ENCODE measurements at regions of chr21 and their contacts with region 1.

Region 1: GRCh38 chr21:37563641-37564340 is 197.2 kb downstream of the DYRK1A start:
- DNase-seq: peak; percentile 98 to 99 (median 98)
- ATAC-seq: peak; percentile 93
- H3K4me3 ChIP-seq: peak overlapping the region; percentile 61
- H3K27ac ChIP-seq: peak overlapping the region; percentile 90
- H3K4me1 ChIP-seq: peaks cover 30 to 55% of the 10 kb centered on the region in 2 experiments
- H3K27me3 ChIP-seq: no peaks in the 10 kb centered on the region
- CTCF ChIP-seq: peak; percentile 47 to 69 (median 63)
- EP300 ChIP-seq: peak; percentile 59
- POLR2A ChIP-seq: peak; percentile 87
- RAD21 ChIP-seq: peak; percentile 41 to 55

Region 2: GRCh38 chr21:37220981-37221664 is 342.7 kb before region 1 on chr21:
- CTCF ChIA-PET with region 1: no interaction called
- POLR2A ChIA-PET with region 1: interaction called, 3 read pairs
- in situ Hi-C with region 1: no loop called
- intact Hi-C with region 1: loop called (anchors 10 kb)
- DNase-seq: peak; percentile 90 to 94 (median 91)
- ATAC-seq: peak; percentile 97
- H3K4me3 ChIP-seq: peak overlapping the region; percentile 46
- H3K27ac ChIP-seq: peak overlapping the region; percentile 70
- H3K4me1 ChIP-seq: peaks cover 0 to 12% of the 10 kb centered on the region in 2 experiments; a peak in 1 of 5 replicates
- H3K27me3 ChIP-seq: no peaks in the 10 kb centered on the region
- CTCF ChIP-seq: peak; percentile 49 to 60 (median 55); a peak in 5 of 6 replicates
- EP300 ChIP-seq: no peak
- POLR2A ChIP-seq: peak; percentile 79
- RAD21 ChIP-seq: peak; percentile 52 to 78

Region 3: DNA sequence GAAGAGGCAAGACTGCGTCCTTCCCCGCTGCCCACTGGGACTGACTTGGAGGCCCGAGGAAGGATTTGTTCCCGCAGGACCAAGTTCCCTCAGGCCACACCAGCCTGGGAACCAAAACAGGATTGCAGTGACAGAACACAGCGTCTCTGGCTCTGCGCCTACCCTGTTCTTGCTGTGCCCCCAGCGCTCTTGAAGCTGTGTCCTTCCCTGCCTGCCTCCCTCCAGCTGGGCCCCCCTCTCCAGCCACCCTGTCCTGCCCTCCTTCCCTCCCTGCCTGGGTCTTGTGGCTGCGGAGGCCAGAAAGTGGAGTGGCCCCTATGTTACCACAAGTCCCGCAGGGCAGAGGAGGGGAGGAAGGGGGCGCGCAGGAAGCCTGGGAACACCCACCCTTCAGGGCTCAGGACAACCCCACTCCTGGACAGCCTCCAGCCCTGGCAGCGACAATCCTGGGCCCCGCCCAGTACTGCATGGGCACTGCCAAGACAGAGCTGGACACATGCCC is 32.3 kb before region 1 on chr21:
- CTCF ChIA-PET with region 1: no interaction called
- POLR2A ChIA-PET with region 1: interaction called, 7 read pairs
- in situ Hi-C with region 1: no loop called
- intact Hi-C with region 1: loop called (anchors 2 kb)
- DNase-seq: no peak
- ATAC-seq: no peak
- H3K4me3 ChIP-seq: no peak overlapping the region
- H3K27ac ChIP-seq: no peak overlapping the region
- H3K4me1 ChIP-seq: peaks cover 15 to 19% of the 10 kb centered on the region in 2 experiments
- H3K27me3 ChIP-seq: no peaks in the 10 kb centered on the region
- CTCF ChIP-seq: no peak
- EP300 ChIP-seq: no peak
- POLR2A ChIP-seq: no peak
- RAD21 ChIP-seq: no peak

Region 4: GRCh38 chr21:37551331-37551992 is 12.3 kb before region 1 on chr21:
- CTCF ChIA-PET with region 1: no interaction called
- POLR2A ChIA-PET with region 1: interaction called, 28 read pairs
- in situ Hi-C with region 1: no loop called
- intact Hi-C with region 1: no loop called
- DNase-seq: no peak
- ATAC-seq: no peak
- H3K4me3 ChIP-seq: no peak overlapping the region
- H3K27ac ChIP-seq: no peak overlapping the region
- H3K4me1 ChIP-seq: peaks cover 30 to 46% of the 10 kb centered on the region in 2 experiments
- H3K27me3 ChIP-seq: peaks cover 3 to 4% of the 10 kb centered on the region in 2 experiments; a peak in 1 of 5 replicates
- CTCF ChIP-seq: no peak
- EP300 ChIP-seq: no peak
- POLR2A ChIP-seq: no peak
- RAD21 ChIP-seq: no peak

Region 5: GRCh38 chr21:37575580-37575979 is 11.8 kb after region 1 on chr21:
- CTCF ChIA-PET with region 1: interaction called, 3 read pairs
- POLR2A ChIA-PET with region 1: interaction called, 12 read pairs
- in situ Hi-C with region 1: no loop called
- intact Hi-C with region 1: no loop called
- DNase-seq: peak in 1 of 4 experiments; percentile 33
- ATAC-seq: peak; percentile 67
- H3K4me3 ChIP-seq: no peak overlapping the region
- H3K27ac ChIP-seq: no peak overlapping the region
- H3K4me1 ChIP-seq: peaks cover 0 to 5% of the 10 kb centered on the region in 2 experiments; a peak in 2 of 5 replicates
- H3K27me3 ChIP-seq: no peaks in the 10 kb centered on the region; a peak in 1 of 5 replicates
- CTCF ChIP-seq: no peak
- EP300 ChIP-seq: no peak
- POLR2A ChIP-seq: no peak
- RAD21 ChIP-seq: no peak

Region 6: GRCh38 chr21:37582590-37582989 is 18.8 kb after region 1 on chr21:
- CTCF ChIA-PET with region 1: interaction called, 3 read pairs
- POLR2A ChIA-PET with region 1: interaction called, 5 read pairs
- in situ Hi-C with region 1: no loop called
- intact Hi-C with region 1: loop called (anchors 2 kb)
- DNase-seq: peak; percentile 37 to 78 (median 60)
- ATAC-seq: peak; percentile 99
- H3K4me3 ChIP-seq: no peak overlapping the region
- H3K27ac ChIP-seq: no peak overlapping the region
- H3K4me1 ChIP-seq: no peaks in the 10 kb centered on the region; a peak in 1 of 5 replicates
- H3K27me3 ChIP-seq: peaks cover 0 to 6% of the 10 kb centered on the region in 2 experiments; a peak in 1 of 5 replicates
- CTCF ChIP-seq: peak; percentile 78 to 93 (median 91)
- EP300 ChIP-seq: no peak; the same call in none of the 2 replicates
- POLR2A ChIP-seq: no peak
- RAD21 ChIP-seq: peak; percentile 67 to 95

Region 7: DNA sequence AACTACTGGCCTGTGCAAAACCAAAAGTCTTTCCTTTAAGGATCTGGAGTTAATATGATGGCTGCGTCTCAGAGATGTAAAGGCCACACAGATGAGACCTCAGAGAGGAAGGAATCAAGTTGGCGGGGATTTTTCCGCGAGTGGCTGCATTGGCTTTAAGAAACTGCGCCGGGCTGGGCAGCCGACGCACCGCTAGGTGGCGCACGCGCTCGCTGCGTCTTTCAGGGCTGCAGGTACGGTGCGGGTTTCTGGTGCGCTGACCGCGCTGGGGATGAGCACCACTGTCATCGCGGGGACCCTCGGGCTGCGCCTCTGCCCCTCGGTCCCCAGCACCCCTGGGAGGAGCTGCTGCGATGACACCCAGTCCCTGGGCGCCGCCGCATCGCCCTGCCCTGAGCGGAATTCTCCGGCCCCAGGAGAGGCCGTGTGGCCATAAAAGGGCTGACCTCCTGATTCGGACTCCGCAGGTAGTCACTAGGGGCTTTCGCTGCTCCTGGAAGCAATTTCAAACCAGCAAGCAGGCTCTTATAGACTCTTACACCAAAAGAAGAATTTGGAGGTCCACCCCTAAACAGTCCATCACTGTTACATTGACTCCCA is 111.5 kb after region 1 on chr21:
- CTCF ChIA-PET with region 1: no interaction called
- POLR2A ChIA-PET with region 1: no interaction called
- in situ Hi-C with region 1: no loop called
- intact Hi-C with region 1: no loop called
- DNase-seq: peak; percentile 73 to 83 (median 80)
- ATAC-seq: peak; percentile 98
- H3K4me3 ChIP-seq: no peak overlapping the region
- H3K27ac ChIP-seq: no peak overlapping the region
- H3K4me1 ChIP-seq: peaks cover 0 to 5% of the 10 kb centered on the region in 2 experiments; a peak in 2 of 5 replicates
- H3K27me3 ChIP-seq: peaks cover 11 to 42% of the 10 kb centered on the region in 2 experiments
- CTCF ChIP-seq: peak; percentile 85 to 97 (median 90)
- EP300 ChIP-seq: no peak
- POLR2A ChIP-seq: no peak
- RAD21 ChIP-seq: peak; percentile 58 to 80

Measured in K562 (cell line).